HCT116 (cell line): ENCODE measurements at regions of chr5 and their contacts with region 1.

Region 1: DNA sequence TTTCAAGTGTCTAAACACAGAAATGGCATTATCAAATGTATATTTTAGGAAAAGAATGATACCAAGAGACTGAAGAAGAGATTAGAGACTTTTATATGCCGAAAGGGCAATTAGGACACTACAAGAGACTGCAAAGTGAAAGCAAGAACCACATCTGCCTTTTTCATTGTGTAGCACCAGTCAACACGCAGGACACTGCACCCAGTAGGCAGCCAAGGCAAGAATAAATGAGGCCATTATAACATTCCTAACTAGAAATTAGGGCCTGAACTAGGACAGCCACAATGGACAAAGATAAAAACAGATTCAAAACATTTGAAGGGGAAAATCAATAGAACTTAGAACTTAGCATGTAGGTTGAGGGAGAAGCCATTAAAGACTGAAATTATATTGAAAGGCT is 10.8 kb downstream of the CETN3 start:
- DNase-seq: no peak
- ATAC-seq: no peak
- H3K4me3 ChIP-seq: no peak overlapping the region
- H3K27ac ChIP-seq: no peak overlapping the region
- H3K4me1 ChIP-seq: no peaks in the 10 kb centered on the region
- H3K27me3 ChIP-seq: no peaks in the 10 kb centered on the region
- CTCF ChIP-seq: no peak
- POLR2A ChIP-seq: no peak
- RAD21 ChIP-seq: no peak

Region 2: GRCh38 chr5:90409318-90410177 is 10.8 kb after region 1 on chr5 and contains the start of gene CETN3:
- CTCF ChIA-PET with region 1: interaction called, 3 read pairs
- POLR2A ChIA-PET with region 1: interaction called, 29 read pairs
- RAD21 ChIA-PET with region 1: no interaction called
- intact Hi-C with region 1: no loop called
- DNase-seq: peak; percentile 95
- ATAC-seq: peak; percentile 94
- H3K4me3 ChIP-seq: peak within 1 kb of the TSS; percentile 64 to 84
- H3K27ac ChIP-seq: peak within 1 kb of the TSS; percentile 95
- H3K4me1 ChIP-seq: peaks cover 0 to 14% of the 10 kb centered on the region in 2 experiments; a peak in 2 of 4 replicates
- H3K27me3 ChIP-seq: no peaks in the 10 kb centered on the region
- CTCF ChIP-seq: no peak
- POLR2A ChIP-seq: peak; percentile 98
- RAD21 ChIP-seq: no peak
- total RNA-seq, gene CETN3: 42.8 TPM

Region 3: GRCh38 chr5:90949469-90950358 is 551.0 kb after region 1 on chr5:
- CTCF ChIA-PET with region 1: no interaction called
- POLR2A ChIA-PET with region 1: no interaction called
- RAD21 ChIA-PET with region 1: no interaction called
- intact Hi-C with region 1: no loop called
- DNase-seq: no peak
- ATAC-seq: no peak
- H3K4me3 ChIP-seq: no peak overlapping the region
- H3K27ac ChIP-seq: no peak overlapping the region
- H3K4me1 ChIP-seq: no peaks in the 10 kb centered on the region
- H3K27me3 ChIP-seq: no peaks in the 10 kb centered on the region
- CTCF ChIP-seq: no peak
- POLR2A ChIP-seq: no peak
- RAD21 ChIP-seq: no peak